HepG2 (cell line): ENCODE measurements at regions of chr6 and their contacts with region 1.

Region 1: DNA sequence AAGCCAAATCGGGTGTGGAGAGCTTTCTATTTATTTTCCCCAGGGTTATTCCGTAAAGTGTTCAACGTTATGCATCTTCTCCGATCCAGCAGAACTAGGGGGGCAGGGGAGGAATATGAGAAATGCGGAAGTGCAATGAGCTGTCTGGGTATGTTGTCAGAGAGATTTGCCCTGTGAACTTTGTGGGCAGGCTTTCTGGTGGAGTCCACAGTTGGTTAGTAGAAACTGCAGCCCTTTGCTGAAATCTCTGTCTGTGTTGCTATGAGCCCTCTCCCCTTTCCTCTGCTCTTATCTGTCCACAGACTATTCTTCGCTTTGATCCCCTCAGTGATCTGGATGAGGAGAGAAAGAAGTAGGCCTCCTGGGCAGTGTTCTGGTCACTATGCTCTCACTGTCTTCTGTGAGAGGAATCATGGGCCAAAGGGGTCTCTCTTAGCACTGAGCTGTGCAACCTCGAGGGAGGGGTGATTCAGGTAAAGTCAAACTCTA is 158.9 kb upstream of the FUT9 start:
- DNase-seq: peak; percentile 90
- ATAC-seq: peak; percentile 100
- H3K4me3 ChIP-seq: peak overlapping the region; percentile 33 to 63 (median 35)
- H3K27ac ChIP-seq: peak overlapping the region; percentile 95
- H3K4me1 ChIP-seq: peaks cover 21% of the 10 kb centered on the region
- H3K27me3 ChIP-seq: no peaks in the 10 kb centered on the region
- CTCF ChIP-seq: no peak
- EP300 ChIP-seq: peak in 1 of 2 experiments; percentile 74; a peak in 2 of 4 replicates
- POLR2A ChIP-seq: peak; percentile 60 to 62; a peak in 3 of 4 replicates
- RAD21 ChIP-seq: no peak

Region 2: DNA sequence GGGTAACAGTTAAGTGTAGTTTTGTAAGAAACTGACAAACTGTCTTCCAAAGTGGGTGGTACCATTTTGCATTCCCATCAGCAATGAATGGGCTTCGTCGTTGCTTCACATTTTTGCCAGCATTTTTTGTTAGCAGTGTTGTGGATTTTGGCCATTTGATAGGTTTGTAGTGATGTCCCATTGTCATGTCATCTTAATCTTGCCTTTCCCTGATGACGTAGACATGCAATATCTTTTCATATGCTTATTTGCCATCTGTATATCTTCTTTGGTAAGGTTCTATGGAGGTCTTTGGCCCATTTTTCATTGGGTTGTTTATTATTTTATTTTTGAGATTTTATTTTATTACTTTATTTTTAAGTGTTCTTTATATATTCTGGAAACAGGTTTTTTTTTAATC is 466.9 kb before region 1 on chr6:
- CTCF ChIA-PET with region 1: no interaction called
- POLR2A ChIA-PET with region 1: no interaction called
- in situ Hi-C with region 1: no loop called
- intact Hi-C with region 1: no loop called
- DNase-seq: no peak
- ATAC-seq: no peak
- H3K4me3 ChIP-seq: no peak overlapping the region
- H3K27ac ChIP-seq: no peak overlapping the region
- H3K4me1 ChIP-seq: no peaks in the 10 kb centered on the region
- H3K27me3 ChIP-seq: no peaks in the 10 kb centered on the region
- CTCF ChIP-seq: no peak
- EP300 ChIP-seq: no peak
- POLR2A ChIP-seq: no peak
- RAD21 ChIP-seq: no peak

Region 3: GRCh38 chr6:95790787-95791186 is 66.1 kb before region 1 on chr6:
- CTCF ChIA-PET with region 1: no interaction called
- POLR2A ChIA-PET with region 1: no interaction called
- in situ Hi-C with region 1: no loop called
- intact Hi-C with region 1: no loop called
- DNase-seq: peak; percentile 12
- ATAC-seq: no peak
- H3K4me3 ChIP-seq: no peak overlapping the region
- H3K27ac ChIP-seq: no peak overlapping the region
- H3K4me1 ChIP-seq: peaks cover 25% of the 10 kb centered on the region
- H3K27me3 ChIP-seq: no peaks in the 10 kb centered on the region
- CTCF ChIP-seq: no peak
- EP300 ChIP-seq: no peak
- POLR2A ChIP-seq: no peak
- RAD21 ChIP-seq: no peak

Region 4: GRCh38 chr6:95804847-95805541 is 51.9 kb before region 1 on chr6:
- CTCF ChIA-PET with region 1: no interaction called
- POLR2A ChIA-PET with region 1: interaction called, 9 read pairs
- in situ Hi-C with region 1: no loop called
- intact Hi-C with region 1: loop called (anchors 2 kb)
- DNase-seq: peak; percentile 98
- ATAC-seq: peak; percentile 98
- H3K4me3 ChIP-seq: peak overlapping the region in 1 of 3 experiments; percentile 13; a peak in 1 of 6 replicates
- H3K27ac ChIP-seq: peak overlapping the region; percentile 85
- H3K4me1 ChIP-seq: peaks cover 68% of the 10 kb centered on the region
- H3K27me3 ChIP-seq: no peaks in the 10 kb centered on the region
- CTCF ChIP-seq: no peak
- EP300 ChIP-seq: peak; percentile 94 to 99; a peak in 3 of 4 replicates
- POLR2A ChIP-seq: no peak
- RAD21 ChIP-seq: no peak

Region 5: DNA sequence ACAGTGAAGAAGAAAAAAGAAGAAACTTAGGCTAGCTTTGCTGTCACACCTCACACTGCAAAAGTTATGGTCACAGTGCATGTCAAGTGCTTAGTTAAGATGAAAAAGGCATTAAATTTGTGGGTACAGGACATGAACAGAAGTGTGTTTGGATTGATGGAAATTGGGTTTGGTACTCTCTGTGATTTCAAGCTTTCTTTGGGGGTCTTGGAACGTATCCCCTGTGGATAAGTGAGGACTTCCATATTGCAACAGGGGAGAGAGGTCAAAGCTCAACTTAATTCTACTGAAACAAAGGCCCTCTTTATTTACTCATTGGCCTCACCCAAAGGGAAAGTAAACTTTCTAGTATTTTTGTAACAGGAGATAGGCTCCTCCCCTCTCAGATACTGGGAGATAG is 20.6 kb after region 1 on chr6:
- CTCF ChIA-PET with region 1: no interaction called
- POLR2A ChIA-PET with region 1: interaction called, 11 read pairs
- in situ Hi-C with region 1: no loop called
- intact Hi-C with region 1: no loop called
- DNase-seq: peak; percentile 88
- ATAC-seq: peak; percentile 96
- H3K4me3 ChIP-seq: peak overlapping the region in 1 of 3 experiments; percentile 19; a peak in 1 of 6 replicates
- H3K27ac ChIP-seq: peak overlapping the region; percentile 56
- H3K4me1 ChIP-seq: peaks cover 55% of the 10 kb centered on the region
- H3K27me3 ChIP-seq: no peaks in the 10 kb centered on the region; a peak in 1 of 5 replicates
- CTCF ChIP-seq: no peak
- EP300 ChIP-seq: peak in 1 of 2 experiments; percentile 84; a peak in 2 of 4 replicates
- POLR2A ChIP-seq: no peak
- RAD21 ChIP-seq: no peak